ENCODE measurements at regions of chr3 and their contacts with region 1.

Region 1: DNA sequence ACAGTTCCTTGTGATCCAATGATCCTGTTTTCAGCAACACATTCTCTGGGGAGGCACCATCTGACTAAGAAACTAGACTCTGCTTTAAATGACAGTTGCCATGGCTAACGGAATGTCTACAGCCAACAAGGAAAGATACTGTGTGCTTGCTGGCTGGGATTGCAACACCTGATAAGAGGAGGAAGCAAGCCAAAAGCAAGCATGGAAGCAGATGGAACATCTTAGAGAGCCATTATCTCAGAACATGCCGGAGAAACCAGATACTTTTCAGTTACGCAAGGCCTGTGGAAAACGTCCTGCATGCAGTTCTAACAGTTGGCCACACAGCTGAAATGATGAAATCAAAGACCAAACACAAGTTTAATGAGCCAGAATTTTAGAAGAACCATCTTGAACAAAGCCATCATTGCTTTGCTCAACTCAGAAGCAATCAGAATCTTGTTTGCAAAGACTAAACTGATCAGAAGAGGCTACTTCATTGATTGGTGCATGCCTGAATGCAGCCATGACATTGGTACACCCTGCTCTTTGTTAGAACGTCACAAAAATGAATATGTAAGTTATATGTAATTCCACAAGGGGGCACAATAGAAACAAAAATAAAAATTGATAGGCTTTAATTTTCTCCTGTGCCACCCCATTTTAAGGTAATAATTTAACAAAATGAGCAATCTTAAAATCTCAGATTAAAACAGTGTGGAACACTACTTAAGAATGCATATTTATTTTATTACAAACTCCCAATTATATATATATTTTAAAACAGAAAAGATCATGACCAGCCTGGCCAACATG is 50.8 kb downstream of the GXYLT2 start:
- DNase-seq: peak; percentile 58
- H3K4me3 ChIP-seq: no peak overlapping the region
- H3K27ac ChIP-seq: peak overlapping the region in 1 of 2 donors; percentile 22
- H3K4me1 ChIP-seq: no peaks in the 10 kb centered on the region
- H3K27me3 ChIP-seq: no peaks in the 10 kb centered on the region
- CTCF ChIP-seq: peak; percentile 23 to 78 (median 70)
- POLR2A ChIP-seq: no peak

Region 2: DNA sequence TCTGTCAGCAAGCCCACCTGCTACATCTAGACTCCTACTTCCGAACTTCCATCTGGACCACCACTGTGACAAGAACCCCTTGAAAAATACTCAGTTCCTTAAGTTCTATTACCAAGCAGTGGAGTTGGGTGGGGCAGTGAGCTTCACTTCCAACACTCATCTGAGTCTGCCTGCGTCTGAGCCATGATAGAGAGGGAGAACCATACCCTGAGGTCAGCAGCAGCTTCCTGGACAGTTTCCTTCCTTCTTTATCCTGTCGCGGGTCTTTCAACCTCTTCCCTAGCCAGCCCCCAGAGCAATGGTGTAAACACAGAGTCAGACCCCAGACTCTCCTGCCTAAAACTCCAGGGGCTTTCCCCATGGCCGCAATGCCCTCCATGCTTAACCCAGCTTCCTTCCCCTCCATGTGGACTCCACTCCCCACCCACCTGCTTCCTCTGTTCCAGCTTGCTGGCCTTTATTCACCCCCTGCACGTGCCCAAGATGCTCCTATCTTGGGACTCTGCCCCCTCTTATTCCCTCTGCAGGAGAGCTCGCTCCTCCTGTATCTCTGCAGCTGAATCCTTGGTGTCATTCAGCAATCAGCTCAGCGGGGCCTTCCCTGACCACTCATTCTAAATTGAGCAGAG is 301.6 kb before region 1 on chr3:
- intact Hi-C with region 1: no loop called
- DNase-seq: no peak
- H3K4me3 ChIP-seq: no peak overlapping the region
- H3K27ac ChIP-seq: no peak overlapping the region
- H3K4me1 ChIP-seq: no peaks in the 10 kb centered on the region
- H3K27me3 ChIP-seq: no peaks in the 10 kb centered on the region
- CTCF ChIP-seq: no peak
- POLR2A ChIP-seq: no peak

Region 3: GRCh38 chr3:72847751-72848702 is 90.6 kb before region 1 on chr3 and contains the start of gene SHQ1:
- intact Hi-C with region 1: loop called (anchors 5 kb)
- DNase-seq: peak; percentile 94
- H3K4me3 ChIP-seq: peak within 1 kb of the TSS; percentile 72 to 77
- H3K27ac ChIP-seq: peak within 1 kb of the TSS; percentile 67 to 70
- H3K4me1 ChIP-seq: peaks cover 2% of the 10 kb centered on the region
- H3K27me3 ChIP-seq: no peaks in the 10 kb centered on the region
- CTCF ChIP-seq: no peak
- POLR2A ChIP-seq: peak; percentile 38
- total RNA-seq, gene SHQ1: 12.9 to 31.9 TPM

Region 4: GRCh38 chr3:72887705-72888545 is 50.7 kb before region 1 on chr3 and contains the start of gene GXYLT2:
- intact Hi-C with region 1: loop called (anchors 5 kb)
- DNase-seq: peak; percentile 52
- H3K4me3 ChIP-seq: peak within 1 kb of the TSS; percentile 35
- H3K27ac ChIP-seq: peak within 1 kb of the TSS; percentile 1 to 2
- H3K4me1 ChIP-seq: no peaks in the 10 kb centered on the region
- H3K27me3 ChIP-seq: no peaks in the 10 kb centered on the region
- CTCF ChIP-seq: no peak
- POLR2A ChIP-seq: no peak
- total RNA-seq, gene GXYLT2: 7.7 to 20.9 TPM

Region 5: GRCh38 chr3:73056014-73056844 is 117.6 kb after region 1 on chr3:
- intact Hi-C with region 1: loop called (anchors 2 kb)
- DNase-seq: no peak
- H3K4me3 ChIP-seq: no peak overlapping the region
- H3K27ac ChIP-seq: no peak overlapping the region
- H3K4me1 ChIP-seq: peaks cover 4% of the 10 kb centered on the region
- H3K27me3 ChIP-seq: no peaks in the 10 kb centered on the region
- CTCF ChIP-seq: peak in 3 of 4 experiments; percentile 35 to 65 (median 65)
- POLR2A ChIP-seq: no peak

Region 6: GRCh38 chr3:73086071-73086494 is 147.4 kb after region 1 on chr3:
- intact Hi-C with region 1: loop called (anchors 10 kb)
- DNase-seq: peak; percentile 14
- H3K4me3 ChIP-seq: no peak overlapping the region
- H3K27ac ChIP-seq: no peak overlapping the region
- H3K4me1 ChIP-seq: no peaks in the 10 kb centered on the region
- H3K27me3 ChIP-seq: no peaks in the 10 kb centered on the region
- CTCF ChIP-seq: peak; percentile 49 to 82 (median 66)
- POLR2A ChIP-seq: no peak

Measured in prostate gland (tissue), 2 donors.